ENCODE measurements at regions of chr3 and their contacts with region 1.

Region 1: GRCh38 chr3:196942226-196942914 is at the start of gene NCBP2:
- DNase-seq: peak; percentile 99 to 100 (median 99)
- H3K4me3 ChIP-seq: peak within 1 kb of the TSS; percentile 60 to 99 (median 97)
- H3K27ac ChIP-seq: peak within 1 kb of the TSS; percentile 90 to 97
- H3K4me1 ChIP-seq: peaks cover 7 to 29% (median 19%) of the 10 kb centered on the region in 4 experiments
- H3K27me3 ChIP-seq: no peaks in the 10 kb centered on the region

Region 2: DNA sequence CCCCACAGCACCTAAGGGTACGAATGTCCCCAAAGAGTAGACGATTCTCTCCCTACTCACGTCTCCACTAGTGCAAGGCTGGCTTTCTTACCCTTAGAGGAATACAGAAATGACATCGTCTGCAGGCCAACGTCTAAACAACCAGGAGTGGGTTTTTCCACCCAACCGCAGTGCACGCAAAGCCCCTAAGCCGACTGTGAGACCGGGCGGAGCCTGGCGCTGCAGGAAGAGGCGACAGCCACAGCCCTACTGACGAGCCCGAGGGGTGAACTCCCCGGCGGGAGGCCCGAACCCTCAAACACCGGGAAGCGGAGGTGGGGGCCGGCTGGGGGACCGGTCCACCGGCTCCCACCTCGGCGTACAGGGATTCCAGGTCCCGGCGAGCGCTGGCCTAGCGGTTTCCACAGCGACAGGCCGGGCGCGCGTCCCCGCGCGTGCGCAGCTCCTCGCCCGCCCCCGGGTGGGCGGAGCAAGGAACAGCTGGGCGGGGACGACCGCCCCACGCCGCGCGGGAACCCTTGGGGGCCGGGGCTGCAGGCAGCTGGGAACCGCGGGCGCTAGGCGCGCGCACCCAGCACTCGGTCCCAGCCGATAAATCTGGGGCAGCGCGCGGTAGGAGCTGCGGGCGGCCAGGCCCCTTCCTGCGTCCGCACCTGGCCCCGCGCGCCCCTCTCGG is 230.4 kb before region 1 on chr3 and contains the starts of genes CEP19 and PIGX:
- CTCF ChIA-PET with region 1: no interaction called
- POLR2A ChIA-PET with region 1: no interaction called
- DNase-seq: peak; percentile 95 to 98 (median 98)
- H3K4me3 ChIP-seq: peak within 1 kb of the TSS; percentile 84 to 94 (median 86)
- H3K27ac ChIP-seq: peak within 1 kb of the TSS; percentile 97
- H3K4me1 ChIP-seq: peaks cover 3 to 23% (median 17%) of the 10 kb centered on the region in 4 experiments
- H3K27me3 ChIP-seq: no peaks in the 10 kb centered on the region

Region 3: GRCh38 chr3:196867507-196868296 is 74.7 kb before region 1 on chr3 and contains the start of gene SENP5:
- CTCF ChIA-PET with region 1: interaction called, 5 read pairs
- POLR2A ChIA-PET with region 1: interaction called, 17 read pairs
- DNase-seq: peak; percentile 90 to 95 (median 94)
- H3K4me3 ChIP-seq: peak within 1 kb of the TSS; percentile 86 to 99 (median 96)
- H3K27ac ChIP-seq: peak within 1 kb of the TSS; percentile 88 to 93
- H3K4me1 ChIP-seq: peaks cover 4 to 23% (median 17%) of the 10 kb centered on the region in 4 experiments
- H3K27me3 ChIP-seq: no peaks in the 10 kb centered on the region

Region 4: GRCh38 chr3:197372047-197372666 is 429.8 kb after region 1 on chr3:
- CTCF ChIA-PET with region 1: no interaction called
- POLR2A ChIA-PET with region 1: no interaction called
- DNase-seq: no peak
- H3K4me3 ChIP-seq: no peak overlapping the region
- H3K27ac ChIP-seq: no peak overlapping the region
- H3K4me1 ChIP-seq: no peaks in the 10 kb centered on the region
- H3K27me3 ChIP-seq: peaks cover 0 to 9% (median 6%) of the 10 kb centered on the region in 5 experiments